GM10248 (cell line): ENCODE measurements at regions of chr22 and their contacts with region 1.

Region 1: GRCh38 chr22:46563381-46564083 is 26.1 kb upstream of the CELSR1 start:
- DNase-seq: peak; percentile 85
- CTCF ChIP-seq: peak; percentile 93

Region 2: GRCh38 chr22:46346680-46347405 is 216.7 kb before region 1 on chr22:
- CTCF ChIA-PET with region 1: no interaction called
- POLR2A ChIA-PET with region 1: no interaction called
- DNase-seq: no peak
- CTCF ChIP-seq: no peak

Region 3: DNA sequence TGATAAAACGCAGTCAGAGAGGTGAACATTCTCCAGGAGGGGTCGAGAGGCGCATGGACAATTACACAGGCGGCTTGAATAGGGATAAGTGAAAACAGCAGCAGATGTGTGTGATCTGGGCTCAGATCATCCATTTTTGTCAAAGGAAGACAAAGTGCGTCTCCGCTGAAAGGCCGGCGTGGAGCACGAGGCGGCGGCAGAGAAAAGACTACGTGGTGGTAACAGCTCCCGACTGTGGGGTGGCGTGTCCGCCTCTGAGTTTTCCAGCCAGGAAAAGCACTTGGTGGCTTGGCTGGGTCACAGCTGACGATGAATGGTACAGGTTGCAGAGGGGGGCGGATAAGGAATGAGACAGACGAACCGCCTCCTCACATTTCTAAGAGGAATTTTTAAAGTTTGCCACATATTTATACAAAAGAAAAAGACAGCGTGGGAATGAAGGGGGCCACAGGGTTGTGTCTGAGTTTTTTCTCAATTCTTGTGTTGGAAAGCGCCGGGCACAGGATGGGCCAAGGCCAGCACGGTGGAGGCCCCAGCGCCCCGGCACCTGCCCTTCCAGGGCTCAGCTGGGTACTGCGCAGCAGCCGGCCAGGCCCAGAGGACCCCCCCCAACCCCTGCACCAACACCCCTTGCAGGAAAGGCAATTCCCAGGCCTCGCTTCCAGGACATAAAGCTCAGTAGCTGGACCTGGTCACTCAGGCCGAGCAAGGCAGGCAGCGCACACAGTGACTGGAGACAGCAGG is 147.6 kb before region 1 on chr22:
- CTCF ChIA-PET with region 1: no interaction called
- POLR2A ChIA-PET with region 1: no interaction called
- DNase-seq: no peak
- CTCF ChIP-seq: no peak

Region 4: GRCh38 chr22:46547883-46548244 is 15.7 kb before region 1 on chr22:
- CTCF ChIA-PET with region 1: interaction called, 36 read pairs
- POLR2A ChIA-PET with region 1: no interaction called
- DNase-seq: no peak
- CTCF ChIP-seq: no peak

Region 5: GRCh38 chr22:46574966-46575910 is 11.7 kb after region 1 on chr22:
- CTCF ChIA-PET with region 1: interaction called, 11 read pairs
- POLR2A ChIA-PET with region 1: no interaction called
- DNase-seq: no peak
- CTCF ChIP-seq: no peak

Region 6: DNA sequence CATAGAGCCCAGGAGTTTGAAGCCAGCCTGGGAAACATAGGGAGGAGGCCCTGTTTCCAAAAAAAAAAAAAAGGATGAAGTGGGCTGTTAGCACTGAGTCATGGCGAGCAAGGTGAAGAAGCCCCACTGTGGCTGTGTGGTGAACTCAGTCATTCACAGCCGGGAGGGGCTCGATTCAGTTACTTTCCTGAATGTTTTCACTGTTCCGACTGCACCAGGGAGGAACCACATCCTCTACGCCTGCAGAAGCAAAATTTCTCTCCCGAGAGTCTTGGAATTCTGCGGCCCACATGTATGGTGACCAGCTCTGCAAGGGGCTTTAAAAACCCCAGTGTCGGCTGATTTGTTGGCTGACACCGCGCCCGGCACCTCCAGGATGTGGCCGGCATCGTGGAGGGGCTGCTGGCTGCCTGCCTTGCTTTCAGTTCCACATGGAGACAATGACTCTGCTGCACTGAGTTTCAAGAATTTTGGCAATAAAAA is 28.9 kb after region 1 on chr22:
- CTCF ChIA-PET with region 1: interaction called, 10 read pairs
- POLR2A ChIA-PET with region 1: no interaction called
- DNase-seq: peak; percentile 75
- CTCF ChIP-seq: no peak

Region 7: DNA sequence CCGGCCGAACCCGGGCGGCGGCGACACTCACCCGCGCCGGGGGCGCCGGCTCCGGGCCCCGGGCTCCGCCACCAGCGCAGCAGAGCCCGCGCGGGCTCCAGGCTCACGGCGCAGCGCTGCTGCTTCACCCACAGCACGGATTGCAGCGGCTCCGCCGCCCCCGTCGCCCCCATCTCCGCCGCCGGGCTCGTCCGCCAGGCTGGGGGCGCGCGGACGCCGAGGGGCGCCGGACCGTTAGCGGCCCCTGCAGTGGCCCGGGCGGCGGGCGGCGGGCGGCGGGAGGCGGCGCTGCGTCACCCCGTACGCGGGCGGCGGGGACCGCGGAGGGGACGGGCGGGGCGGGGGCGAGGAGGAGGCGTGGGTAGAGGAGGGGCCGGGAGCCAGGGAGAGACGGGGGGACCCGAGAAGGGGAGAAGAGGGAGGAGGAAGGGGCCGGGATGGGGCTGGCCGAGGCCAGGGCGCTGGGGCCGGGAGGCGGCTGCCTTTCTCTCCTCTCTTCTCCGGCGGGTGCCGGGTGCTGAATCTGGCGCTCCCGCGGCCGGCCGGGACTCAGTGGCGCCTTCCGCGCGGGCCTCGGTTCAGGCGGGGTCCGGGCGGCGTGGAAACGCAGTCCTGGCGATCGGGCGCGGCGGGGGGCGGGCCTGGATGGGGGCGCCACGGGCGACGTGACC is 174.6 kb after region 1 on chr22 and contains the start of gene CERK:
- CTCF ChIA-PET with region 1: interaction called, 10 read pairs
- POLR2A ChIA-PET with region 1: no interaction called
- DNase-seq: peak; percentile 84
- CTCF ChIP-seq: no peak